HEK293 (cell line): ENCODE measurements at regions of chr10 and their contacts with region 1.

Region 1: DNA sequence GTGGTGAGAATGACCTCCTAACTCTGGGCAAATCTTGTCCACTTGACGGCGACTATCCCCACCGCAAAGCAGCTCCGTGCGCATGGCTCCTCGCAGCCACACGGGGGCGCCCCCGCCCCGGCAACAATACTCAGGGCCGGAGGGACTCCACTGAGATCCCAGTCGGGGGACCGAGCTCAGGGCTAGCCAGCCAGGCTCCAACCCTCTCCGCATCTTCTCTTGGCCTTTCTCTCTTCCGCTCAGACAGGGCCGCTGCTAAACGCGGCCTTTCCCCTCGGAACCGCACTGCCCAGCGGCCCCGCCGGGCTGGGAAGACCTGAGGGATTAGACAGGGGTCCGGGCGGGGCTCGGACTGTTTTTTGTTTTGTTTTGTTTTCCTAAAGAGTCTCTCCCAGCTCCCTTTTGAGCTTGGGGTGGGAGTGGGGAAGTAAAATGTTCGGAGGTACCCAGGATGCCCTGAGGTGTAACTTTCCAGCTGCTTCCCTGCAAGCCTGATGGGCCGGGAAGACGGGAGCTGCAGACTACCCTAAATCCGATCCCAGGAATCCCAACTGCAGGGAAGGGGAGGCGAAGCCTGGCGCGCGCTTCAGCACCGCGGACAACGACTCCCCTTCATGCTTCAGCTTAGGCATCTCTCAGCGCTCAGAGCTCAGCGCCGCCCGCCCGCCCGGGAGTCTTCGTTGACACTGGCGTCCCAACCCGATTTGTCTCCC is 2.7 kb downstream of the KCNIP2 start:
- H3K4me3 ChIP-seq: peak overlapping the region; percentile 2
- H3K27ac ChIP-seq: no peak overlapping the region
- H3K4me1 ChIP-seq: peaks cover 6% of the 10 kb centered on the region
- CTCF ChIP-seq: peak; percentile 96

Region 2: GRCh38 chr10:101629837-101630632 is 210.9 kb before region 1 on chr10:
- CTCF ChIA-PET with region 1: no interaction called
- POLR2A ChIA-PET with region 1: no interaction called
- H3K4me3 ChIP-seq: no peak overlapping the region
- H3K27ac ChIP-seq: no peak overlapping the region
- H3K4me1 ChIP-seq: no peaks in the 10 kb centered on the region
- CTCF ChIP-seq: no peak

Region 3: GRCh38 chr10:101749047-101750016 is 91.6 kb before region 1 on chr10:
- CTCF ChIA-PET with region 1: no interaction called
- POLR2A ChIA-PET with region 1: no interaction called
- H3K4me3 ChIP-seq: no peak overlapping the region
- H3K27ac ChIP-seq: no peak overlapping the region
- H3K4me1 ChIP-seq: no peaks in the 10 kb centered on the region
- CTCF ChIP-seq: no peak

Region 4: GRCh38 chr10:101858723-101859500 is 18.0 kb after region 1 on chr10:
- CTCF ChIA-PET with region 1: interaction called, 16 read pairs
- POLR2A ChIA-PET with region 1: no interaction called
- H3K4me3 ChIP-seq: no peak overlapping the region
- H3K27ac ChIP-seq: no peak overlapping the region
- H3K4me1 ChIP-seq: no peaks in the 10 kb centered on the region
- CTCF ChIP-seq: no peak

Region 5: GRCh38 chr10:101879456-101880231 is 38.7 kb after region 1 on chr10:
- CTCF ChIA-PET with region 1: interaction called, 14 read pairs
- POLR2A ChIA-PET with region 1: no interaction called
- H3K4me3 ChIP-seq: no peak overlapping the region
- H3K27ac ChIP-seq: no peak overlapping the region
- H3K4me1 ChIP-seq: no peaks in the 10 kb centered on the region; the same call in 1 of the 2 replicates
- CTCF ChIP-seq: no peak

Region 6: GRCh38 chr10:101897633-101898032 is 56.7 kb after region 1 on chr10:
- CTCF ChIA-PET with region 1: interaction called, 19 read pairs
- POLR2A ChIA-PET with region 1: interaction called, 5 read pairs
- H3K4me3 ChIP-seq: no peak overlapping the region
- H3K27ac ChIP-seq: no peak overlapping the region; the same call in 1 of the 2 replicates
- H3K4me1 ChIP-seq: peaks cover 26% of the 10 kb centered on the region
- CTCF ChIP-seq: no peak

Region 7: GRCh38 chr10:102004376-102004775 is 163.5 kb after region 1 on chr10:
- CTCF ChIA-PET with region 1: interaction called, 178 read pairs
- POLR2A ChIA-PET with region 1: interaction called, 18 read pairs
- H3K4me3 ChIP-seq: no peak overlapping the region
- H3K27ac ChIP-seq: no peak overlapping the region
- H3K4me1 ChIP-seq: no peaks in the 10 kb centered on the region
- CTCF ChIP-seq: no peak